ENCODE measurements at regions of chr4 and their contacts with region 1.

Region 1: DNA sequence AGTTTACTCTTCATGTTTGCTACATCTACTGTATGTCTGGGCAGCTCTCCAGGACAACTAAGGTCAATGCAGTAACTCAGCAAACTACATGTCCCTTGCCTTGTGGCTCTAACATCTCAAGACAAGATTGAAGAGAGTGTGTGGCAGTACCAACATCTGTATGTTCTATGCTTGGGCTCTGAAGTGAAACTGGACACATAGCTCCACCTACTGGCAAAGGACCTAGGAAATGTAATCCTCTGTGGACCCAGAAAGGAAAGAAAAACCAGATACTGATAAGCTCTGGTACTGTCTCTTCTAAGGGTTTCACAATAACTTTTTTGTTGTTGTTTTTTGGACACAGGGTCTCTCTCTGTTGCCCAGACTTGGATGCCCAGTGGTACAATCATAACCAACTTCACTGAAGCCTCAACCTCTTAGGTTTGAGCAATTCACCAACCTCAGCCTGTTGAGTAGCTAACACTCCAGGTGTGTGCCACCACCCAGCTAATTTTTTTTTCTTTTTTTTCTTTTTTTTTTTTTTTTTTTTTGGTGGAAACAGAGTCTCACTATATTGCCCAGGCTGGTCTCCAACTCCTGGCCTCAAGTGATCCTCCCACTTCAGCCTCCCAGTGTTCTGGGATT is 64.1 kb downstream of the QDPR start:
- DNase-seq: no peak
- H3K4me3 ChIP-seq: no peak overlapping the region
- H3K27ac ChIP-seq: no peak overlapping the region
- H3K4me1 ChIP-seq: no peaks in the 10 kb centered on the region
- H3K27me3 ChIP-seq: no peaks in the 10 kb centered on the region
- CTCF ChIP-seq: peak; percentile 18 to 57 (median 44)
- EP300 ChIP-seq: no peak
- POLR2A ChIP-seq: no peak

Region 2: DNA sequence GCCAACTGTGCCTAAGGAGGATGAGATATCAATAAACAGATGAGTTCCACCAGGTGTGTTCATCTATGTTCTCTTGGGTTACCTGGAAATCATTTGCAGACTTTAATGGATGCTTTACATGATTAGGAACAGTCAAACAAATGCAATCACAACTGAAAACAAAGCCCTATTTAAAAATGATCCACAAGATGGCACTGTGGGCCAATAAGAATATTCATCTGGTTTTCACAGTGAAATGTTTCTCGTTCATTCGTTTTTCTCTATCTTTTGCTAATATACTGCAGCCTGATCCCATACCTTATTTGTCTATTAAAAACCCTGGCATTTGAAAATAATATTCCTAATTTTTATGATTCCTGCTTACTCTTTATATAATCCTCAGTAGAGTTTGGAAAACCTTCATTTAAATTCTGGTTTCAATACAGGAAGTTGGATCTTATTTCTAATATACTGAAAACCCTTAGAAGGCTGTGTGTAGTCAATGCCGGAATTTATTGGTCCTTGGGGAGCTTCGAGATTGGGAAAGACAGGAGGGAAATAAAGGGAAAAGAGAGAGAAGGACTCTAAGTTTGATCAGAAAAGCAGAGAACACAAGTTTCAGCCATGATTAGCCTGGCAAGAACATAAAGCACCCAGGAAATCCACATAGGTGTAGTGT is 1157.8 kb before region 1 on chr4:
- intact Hi-C with region 1: loop called (anchors 5 kb)
- DNase-seq: no peak
- H3K4me3 ChIP-seq: no peak overlapping the region
- H3K27ac ChIP-seq: no peak overlapping the region
- H3K4me1 ChIP-seq: peaks cover 0 to 8% (median 3%) of the 10 kb centered on the region in 4 donors
- H3K27me3 ChIP-seq: peaks cover 0 to 21% (median 4%) of the 10 kb centered on the region in 3 donors
- CTCF ChIP-seq: peak in 3 of 4 experiments; percentile 29 to 56 (median 41)
- EP300 ChIP-seq: no peak
- POLR2A ChIP-seq: no peak

Region 3: DNA sequence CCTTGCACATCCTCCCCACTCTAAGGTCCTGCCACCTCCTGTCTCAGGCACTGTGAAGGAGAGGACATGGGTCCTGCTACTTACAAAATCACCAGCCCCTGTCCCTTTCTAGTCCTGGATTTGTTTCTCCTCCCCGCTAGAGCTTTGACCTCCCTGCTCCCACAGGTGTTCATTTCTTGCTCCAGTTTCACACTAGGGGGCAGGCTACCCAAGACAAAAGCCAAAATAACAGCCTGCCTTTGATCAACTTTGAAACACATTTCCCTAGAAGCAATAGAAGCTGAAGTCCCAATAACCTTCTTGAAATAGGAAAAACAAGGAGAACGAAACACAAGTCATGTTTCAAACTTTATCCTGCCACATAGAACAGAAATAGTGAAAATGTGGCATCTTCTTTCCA is 100.3 kb before region 1 on chr4:
- intact Hi-C with region 1: loop called (anchors 5 kb)
- DNase-seq: no peak
- H3K4me3 ChIP-seq: no peak overlapping the region
- H3K27ac ChIP-seq: no peak overlapping the region
- H3K4me1 ChIP-seq: no peaks in the 10 kb centered on the region
- H3K27me3 ChIP-seq: no peaks in the 10 kb centered on the region
- CTCF ChIP-seq: peak in 2 of 4 experiments; percentile 26 to 43
- EP300 ChIP-seq: no peak
- POLR2A ChIP-seq: no peak

Measured in sigmoid colon (tissue), 7 donors.